A673 (cell line): ENCODE measurements at regions of chr15 and their contacts with region 1.

Region 1: GRCh38 chr15:60370869-60371700 is 26.7 kb downstream of the ANXA2 start:
- DNase-seq: peak; percentile 96
- H3K4me3 ChIP-seq: no peak overlapping the region
- H3K27ac ChIP-seq: peak overlapping the region; percentile 73
- H3K4me1 ChIP-seq: peaks cover 77% of the 10 kb centered on the region
- H3K27me3 ChIP-seq: no peaks in the 10 kb centered on the region
- CTCF ChIP-seq: no peak

Region 2: DNA sequence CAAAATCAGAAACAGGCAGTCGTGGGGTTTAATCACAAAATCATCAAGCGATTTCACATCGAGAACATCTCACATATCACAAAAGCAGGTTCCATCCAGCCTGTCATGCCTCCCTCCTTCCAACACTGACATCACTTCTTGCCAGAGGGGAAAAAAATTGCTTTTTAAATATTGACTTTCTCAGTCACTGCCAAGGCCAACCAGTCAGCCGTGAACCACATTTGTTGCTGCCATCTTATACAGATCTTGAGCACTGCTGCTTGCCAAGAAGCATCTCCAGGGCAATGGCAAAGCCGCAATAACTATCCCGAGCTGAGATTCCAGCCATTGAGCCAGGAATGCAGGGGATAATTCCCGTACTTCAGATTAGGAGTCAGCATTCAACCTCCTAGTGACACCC is 147.9 kb before region 1 on chr15:
- CTCF ChIA-PET with region 1: no interaction called
- POLR2A ChIA-PET with region 1: no interaction called
- intact Hi-C with region 1: no loop called
- DNase-seq: no peak
- H3K4me3 ChIP-seq: no peak overlapping the region
- H3K27ac ChIP-seq: no peak overlapping the region
- H3K4me1 ChIP-seq: no peaks in the 10 kb centered on the region
- H3K27me3 ChIP-seq: peaks cover 23% of the 10 kb centered on the region
- CTCF ChIP-seq: no peak

Region 3: GRCh38 chr15:60397772-60398445 is 26.8 kb after region 1 on chr15 and contains the start of gene ANXA2:
- CTCF ChIA-PET with region 1: no interaction called
- POLR2A ChIA-PET with region 1: interaction called, 3 read pairs
- intact Hi-C with region 1: loop called (anchors 2 kb)
- DNase-seq: peak; percentile 88
- H3K4me3 ChIP-seq: peak within 1 kb of the TSS; percentile 89
- H3K27ac ChIP-seq: peak within 1 kb of the TSS; percentile 94
- H3K4me1 ChIP-seq: peaks cover 50% of the 10 kb centered on the region
- H3K27me3 ChIP-seq: no peaks in the 10 kb centered on the region
- CTCF ChIP-seq: no peak
- total RNA-seq, gene ANXA2: 880 and 1,038 TPM in 2 replicates